Caco-2 (cell line): ENCODE measurements at regions of chr6 and their contacts with region 1.

Region 1: DNA sequence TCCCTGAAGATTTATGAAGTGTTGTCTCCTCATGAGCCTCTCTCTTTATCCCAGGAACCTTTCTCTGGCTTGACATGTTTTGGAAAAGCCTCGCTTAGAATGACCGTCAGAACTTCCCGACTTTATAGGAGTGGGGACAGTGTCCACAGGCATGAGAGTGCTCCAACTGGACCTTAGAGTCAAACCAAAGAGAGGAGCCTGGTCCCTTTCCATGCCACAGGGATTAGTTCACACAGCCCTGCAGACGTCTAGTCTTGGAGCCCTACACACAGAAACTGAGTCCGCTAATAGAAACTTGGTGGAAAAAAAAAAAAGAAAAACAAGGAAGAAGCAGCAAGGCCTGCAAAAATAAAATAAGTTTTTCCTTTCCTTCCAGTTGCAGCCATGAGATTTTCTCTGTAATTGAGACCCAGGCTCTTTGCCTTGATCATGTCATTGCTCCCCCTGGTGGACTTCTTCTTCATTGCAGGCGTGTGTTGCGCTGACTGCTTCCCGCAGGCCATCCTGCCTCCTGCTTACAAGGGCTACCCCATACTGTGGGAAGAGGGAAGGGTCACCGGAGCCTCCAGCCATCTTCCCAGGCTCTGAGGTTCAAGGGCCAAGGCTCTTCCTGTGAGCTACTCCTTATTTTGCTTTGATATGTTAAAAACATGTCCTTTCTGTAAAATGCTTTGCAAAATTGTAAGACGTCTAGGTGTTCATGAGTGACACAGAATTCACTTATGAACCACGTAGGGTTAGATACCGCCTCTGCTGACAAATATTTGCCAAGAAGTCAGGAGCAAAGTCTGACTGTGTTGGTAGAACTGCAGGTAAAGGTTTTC is 201.0 kb downstream of the UST start:
- DNase-seq: peak; percentile 87 to 88
- H3K4me3 ChIP-seq: no peak overlapping the region; the same call in 1 of the 2 replicates
- H3K4me3 Mint-ChIP-seq: peak overlapping the region; percentile 62
- H3K27ac Mint-ChIP-seq: no peak overlapping the region
- H3K4me1 ChIP-seq: no peaks in the 10 kb centered on the region; the same call in 1 of the 2 replicates
- H3K4me1 Mint-ChIP-seq: peaks cover 7% of the 10 kb centered on the region
- H3K27me3 ChIP-seq: no peaks in the 10 kb centered on the region
- H3K27me3 Mint-ChIP-seq: peaks cover 7% of the 10 kb centered on the region
- CTCF ChIP-seq: peak; percentile 86 to 89

Region 2: GRCh38 chr6:148559848-148560433 is 387.9 kb before region 1 on chr6:
- CTCF ChIA-PET with region 1: no interaction called
- POLR2A ChIA-PET with region 1: no interaction called
- intact Hi-C with region 1: loop called (anchors 1 kb)
- DNase-seq: peak; percentile 57 to 80
- H3K4me3 ChIP-seq: peak overlapping the region; percentile 49
- H3K4me3 Mint-ChIP-seq: peak overlapping the region; percentile 55
- H3K27ac Mint-ChIP-seq: no peak overlapping the region
- H3K4me1 ChIP-seq: no peaks in the 10 kb centered on the region
- H3K4me1 Mint-ChIP-seq: no peaks in the 10 kb centered on the region
- H3K27me3 ChIP-seq: peaks cover 1% of the 10 kb centered on the region; the same call in 1 of the 2 replicates
- H3K27me3 Mint-ChIP-seq: peaks cover 11% of the 10 kb centered on the region
- CTCF ChIP-seq: peak; percentile 83 to 94

Region 3: DNA sequence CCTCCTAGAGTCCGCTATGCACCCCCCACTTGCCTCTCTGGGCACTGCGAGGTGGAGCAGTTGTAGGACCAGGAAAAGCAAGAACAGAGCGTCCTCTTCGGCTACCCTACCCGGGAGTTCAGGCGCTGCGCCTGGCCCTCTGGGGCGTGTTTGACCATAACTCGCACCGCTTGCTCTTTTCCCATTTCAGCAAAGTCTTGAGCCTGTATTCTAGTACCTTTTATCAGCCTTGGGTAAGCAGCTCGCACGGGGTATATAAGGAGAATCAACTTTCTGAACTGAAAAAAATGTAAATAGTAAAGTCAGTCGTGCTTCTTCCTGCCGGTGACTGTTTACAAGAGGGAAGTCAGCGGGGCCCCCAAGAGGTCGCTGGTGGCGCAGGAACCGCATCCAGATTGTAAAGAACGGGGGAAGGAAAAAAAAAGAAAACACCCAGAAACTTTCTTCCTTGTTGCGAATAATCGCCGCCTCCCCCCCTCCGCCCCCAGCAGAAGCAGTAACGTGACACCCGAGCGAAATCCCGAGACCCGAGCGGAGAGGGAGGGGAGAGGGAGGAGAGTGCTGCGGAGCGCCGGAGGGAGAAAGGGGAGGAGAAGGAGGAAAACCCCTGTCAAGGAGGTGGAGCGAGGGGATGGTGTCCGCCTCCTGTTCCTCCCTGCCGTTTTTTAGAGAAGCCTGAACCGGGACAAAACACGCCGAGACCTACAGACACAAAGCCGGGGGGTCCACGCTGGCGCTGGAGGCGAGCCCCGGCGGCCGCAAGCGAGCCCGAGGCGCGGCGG is 201.3 kb before region 1 on chr6 and contains the start of gene UST:
- CTCF ChIA-PET with region 1: no interaction called
- POLR2A ChIA-PET with region 1: no interaction called
- intact Hi-C with region 1: loop called (anchors 1 kb)
- DNase-seq: peak in 1 of 2 experiments; percentile 40
- H3K4me3 ChIP-seq: peak within 1 kb of the TSS; percentile 48
- H3K4me3 Mint-ChIP-seq: peak within 1 kb of the TSS; percentile 87
- H3K27ac Mint-ChIP-seq: no peak within 1 kb of the TSS
- H3K4me1 ChIP-seq: peaks cover 9% of the 10 kb centered on the region; the same call in 1 of the 2 replicates
- H3K4me1 Mint-ChIP-seq: no peaks in the 10 kb centered on the region
- H3K27me3 ChIP-seq: peaks cover 3% of the 10 kb centered on the region
- H3K27me3 Mint-ChIP-seq: peaks cover 62% of the 10 kb centered on the region
- CTCF ChIP-seq: peak; percentile 28 to 40
- total RNA-seq, gene UST: not detected in 2 replicates

Region 4: GRCh38 chr6:148972481-148972880 is 24.6 kb after region 1 on chr6:
- CTCF ChIA-PET with region 1: no interaction called
- POLR2A ChIA-PET with region 1: no interaction called
- intact Hi-C with region 1: loop called (anchors 2 kb)
- DNase-seq: peak; percentile 72 to 79
- H3K4me3 ChIP-seq: no peak overlapping the region
- H3K4me3 Mint-ChIP-seq: no peak overlapping the region
- H3K27ac Mint-ChIP-seq: no peak overlapping the region
- H3K4me1 ChIP-seq: no peaks in the 10 kb centered on the region
- H3K4me1 Mint-ChIP-seq: no peaks in the 10 kb centered on the region
- H3K27me3 ChIP-seq: no peaks in the 10 kb centered on the region; the same call in none of the 2 replicates
- H3K27me3 Mint-ChIP-seq: peaks cover 15% of the 10 kb centered on the region
- CTCF ChIP-seq: peak in 1 of 2 experiments; percentile 16